MCF 10A (cell line): ENCODE measurements at regions of chr11 and their contacts with region 1.

Region 1: DNA sequence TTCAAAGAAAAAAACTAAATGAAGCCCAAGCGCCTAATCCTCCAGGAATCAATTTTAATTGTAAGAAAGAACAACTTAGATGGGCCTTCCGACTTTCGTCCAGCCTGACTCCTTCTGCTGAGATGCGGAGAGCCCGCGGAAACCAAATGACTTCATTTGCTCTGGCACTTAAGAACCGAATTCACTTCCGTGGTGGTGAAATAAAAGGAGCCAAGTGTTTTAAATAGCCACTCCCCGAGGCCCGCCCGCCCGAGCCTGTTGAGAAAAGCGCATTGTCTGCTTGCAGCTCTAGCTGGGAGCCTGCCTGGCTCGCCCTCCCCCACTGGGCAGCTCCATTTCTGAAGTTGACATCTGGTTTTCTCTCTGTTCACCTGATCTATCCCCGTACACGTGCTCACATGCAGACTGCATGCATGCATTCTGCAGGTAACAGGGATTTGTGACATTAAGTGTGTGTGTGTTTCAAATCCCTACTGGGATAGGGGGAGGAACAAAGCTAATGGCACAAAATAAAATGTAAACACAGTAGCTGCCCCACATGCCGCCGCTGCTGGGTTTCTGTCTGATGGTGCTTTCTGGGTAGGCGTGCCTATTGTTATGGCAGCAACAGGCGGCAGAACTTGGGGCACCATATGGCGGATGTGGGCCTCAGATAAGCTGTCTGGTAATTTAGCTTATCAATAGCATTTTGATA is 6.2 kb downstream of the TEAD1 start:
- DNase-seq: peak; percentile 93
- H3K4me3 Mint-ChIP-seq: peak overlapping the region; percentile 90
- H3K27ac Mint-ChIP-seq: peak overlapping the region; percentile 75
- H3K4me1 Mint-ChIP-seq: peaks cover 63% of the 10 kb centered on the region
- H3K27me3 Mint-ChIP-seq: no peaks in the 10 kb centered on the region
- CTCF ChIP-seq: no peak

Region 2: DNA sequence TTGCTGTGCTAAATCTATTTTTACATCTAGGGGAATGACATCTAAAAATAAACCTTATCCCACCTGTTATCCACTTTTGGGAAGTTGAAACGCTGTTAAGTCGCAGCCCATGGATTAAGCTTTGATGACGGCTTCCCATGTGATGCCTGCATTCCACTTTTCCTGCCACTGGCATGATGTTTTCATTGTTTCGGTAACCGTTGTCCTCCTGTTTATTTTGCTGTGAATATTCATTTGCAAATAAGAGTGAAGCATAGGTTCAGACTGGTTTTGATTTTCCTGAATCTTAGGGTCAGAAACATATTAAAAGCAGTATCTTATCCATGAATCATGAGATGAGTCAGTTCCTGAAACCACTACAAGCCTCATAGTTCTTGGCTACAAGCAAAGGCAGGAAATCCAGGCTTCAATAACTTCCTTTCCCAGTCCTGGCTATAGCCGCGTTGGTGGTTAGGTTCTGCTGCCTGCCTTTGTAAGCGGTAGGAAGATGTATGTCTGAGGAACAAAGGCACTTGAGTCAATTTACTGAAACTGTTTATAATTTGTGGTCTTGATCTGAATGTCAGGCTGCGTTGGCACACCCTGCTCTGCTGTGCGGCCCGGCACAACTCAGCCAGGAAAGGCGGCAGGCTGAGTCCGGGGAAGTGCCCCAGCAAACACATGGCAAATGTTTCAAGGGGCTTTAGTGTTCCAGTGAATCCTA is 13.2 kb after region 1 on chr11:
- CTCF ChIA-PET with region 1: interaction called, 8 read pairs
- POLR2A ChIA-PET with region 1: interaction called, 248 read pairs
- intact Hi-C with region 1: loop called (anchors 1 kb)
- DNase-seq: peak; percentile 97
- H3K4me3 Mint-ChIP-seq: peak overlapping the region; percentile 62
- H3K27ac Mint-ChIP-seq: peak overlapping the region; percentile 94
- H3K4me1 Mint-ChIP-seq: peaks cover 75% of the 10 kb centered on the region
- H3K27me3 Mint-ChIP-seq: no peaks in the 10 kb centered on the region
- CTCF ChIP-seq: no peak

Region 3: DNA sequence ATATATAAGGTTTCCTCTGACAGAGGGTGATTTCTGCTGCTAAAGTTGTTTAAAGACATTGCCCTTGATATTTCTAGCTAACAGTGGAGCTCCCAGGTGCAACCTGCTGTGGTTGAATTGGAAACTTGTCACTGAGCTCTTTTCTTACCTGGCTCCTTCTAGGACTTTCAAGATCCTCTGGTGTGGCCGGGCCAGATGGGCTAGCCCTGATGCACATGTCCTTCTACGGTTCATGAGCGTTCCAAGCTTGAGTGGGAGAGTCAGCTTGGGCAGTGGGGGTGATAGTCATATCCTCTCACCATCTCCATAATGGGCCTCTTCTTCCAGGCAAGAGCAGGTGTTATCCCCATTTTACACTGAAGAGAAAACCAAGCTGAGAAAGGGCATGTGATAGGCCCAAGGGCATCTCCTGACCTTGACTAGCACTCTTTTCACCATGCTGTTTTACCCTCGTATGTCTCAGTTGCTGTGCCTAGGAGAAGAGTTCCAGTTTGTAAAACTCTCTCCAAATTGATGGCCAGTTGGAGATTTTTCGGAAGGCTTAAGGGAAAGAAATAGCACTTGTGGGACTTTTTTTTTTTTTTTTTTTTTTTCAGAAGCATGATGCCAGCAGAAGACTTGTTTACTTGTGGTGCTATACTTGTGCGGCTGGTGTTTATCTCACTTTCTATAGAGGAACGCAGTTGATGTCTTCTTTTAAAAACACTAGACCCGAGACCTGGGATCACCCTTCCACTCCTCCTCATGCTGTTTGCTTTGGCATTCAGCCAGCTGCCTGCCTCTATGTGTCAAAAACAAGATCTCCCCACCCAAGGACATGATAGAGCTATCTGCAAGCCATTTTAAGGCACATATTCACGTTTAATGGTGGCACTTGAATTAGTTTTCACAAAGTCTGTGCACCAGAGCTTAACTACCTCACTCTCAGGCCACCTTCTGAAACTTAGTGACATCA is 26.4 kb after region 1 on chr11:
- CTCF ChIA-PET with region 1: interaction called, 3 read pairs
- POLR2A ChIA-PET with region 1: interaction called, 129 read pairs
- intact Hi-C with region 1: no loop called
- DNase-seq: peak; percentile 83
- H3K4me3 Mint-ChIP-seq: peak overlapping the region; percentile 24
- H3K27ac Mint-ChIP-seq: peak overlapping the region; percentile 82
- H3K4me1 Mint-ChIP-seq: peaks cover 70% of the 10 kb centered on the region
- H3K27me3 Mint-ChIP-seq: no peaks in the 10 kb centered on the region
- CTCF ChIP-seq: no peak

Region 4: DNA sequence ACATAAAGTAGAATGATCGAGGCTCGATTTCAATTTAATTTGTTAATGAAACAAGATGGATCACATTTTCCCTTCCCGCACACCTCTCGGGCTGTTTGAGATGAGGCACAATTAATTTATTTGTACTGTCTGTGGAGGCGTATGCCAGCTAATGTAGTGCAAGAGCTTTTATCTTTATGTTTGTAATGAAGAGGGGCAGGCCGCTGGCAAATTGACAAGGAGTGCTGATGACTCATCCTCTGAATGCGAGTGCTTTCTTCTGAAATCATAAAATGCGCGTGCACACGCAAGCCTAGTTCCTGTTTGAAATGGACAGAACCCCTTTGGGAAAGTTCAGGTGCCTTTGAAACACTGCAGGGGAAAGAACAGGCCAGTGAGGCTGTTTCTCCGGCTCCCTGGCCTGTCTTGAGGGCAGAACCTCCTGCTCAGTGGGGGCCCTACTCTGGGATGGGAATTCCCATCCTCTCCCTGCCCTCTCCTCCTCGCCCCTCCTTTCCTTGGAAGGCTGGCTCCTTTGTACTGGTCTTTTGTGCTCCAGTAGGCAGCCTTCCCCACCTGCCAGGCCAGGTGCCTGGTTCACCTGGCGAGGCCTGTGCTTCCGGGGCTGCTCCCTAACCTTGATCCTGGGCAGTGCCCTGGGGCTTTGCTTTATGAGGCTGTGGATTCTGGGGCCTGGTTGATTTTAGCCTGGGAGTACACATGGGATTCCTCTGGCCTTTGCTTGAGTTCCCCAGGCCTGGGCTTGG is 44.1 kb after region 1 on chr11:
- CTCF ChIA-PET with region 1: interaction called, 3 read pairs
- POLR2A ChIA-PET with region 1: interaction called, 46 read pairs
- intact Hi-C with region 1: loop called (anchors 5 kb)
- DNase-seq: peak; percentile 97
- H3K4me3 Mint-ChIP-seq: peak overlapping the region; percentile 63
- H3K27ac Mint-ChIP-seq: peak overlapping the region; percentile 96
- H3K4me1 Mint-ChIP-seq: peaks cover 58% of the 10 kb centered on the region
- H3K27me3 Mint-ChIP-seq: no peaks in the 10 kb centered on the region
- CTCF ChIP-seq: no peak

Region 5: GRCh38 chr11:12813371-12814225 is 133.2 kb after region 1 on chr11:
- CTCF ChIA-PET with region 1: interaction called, 11 read pairs
- POLR2A ChIA-PET with region 1: interaction called, 21 read pairs
- intact Hi-C with region 1: loop called (anchors 2 kb)
- DNase-seq: peak; percentile 75
- H3K4me3 Mint-ChIP-seq: no peak overlapping the region
- H3K27ac Mint-ChIP-seq: peak overlapping the region; percentile 26
- H3K4me1 Mint-ChIP-seq: peaks cover 57% of the 10 kb centered on the region
- H3K27me3 Mint-ChIP-seq: no peaks in the 10 kb centered on the region
- CTCF ChIP-seq: peak; percentile 23

Region 6: DNA sequence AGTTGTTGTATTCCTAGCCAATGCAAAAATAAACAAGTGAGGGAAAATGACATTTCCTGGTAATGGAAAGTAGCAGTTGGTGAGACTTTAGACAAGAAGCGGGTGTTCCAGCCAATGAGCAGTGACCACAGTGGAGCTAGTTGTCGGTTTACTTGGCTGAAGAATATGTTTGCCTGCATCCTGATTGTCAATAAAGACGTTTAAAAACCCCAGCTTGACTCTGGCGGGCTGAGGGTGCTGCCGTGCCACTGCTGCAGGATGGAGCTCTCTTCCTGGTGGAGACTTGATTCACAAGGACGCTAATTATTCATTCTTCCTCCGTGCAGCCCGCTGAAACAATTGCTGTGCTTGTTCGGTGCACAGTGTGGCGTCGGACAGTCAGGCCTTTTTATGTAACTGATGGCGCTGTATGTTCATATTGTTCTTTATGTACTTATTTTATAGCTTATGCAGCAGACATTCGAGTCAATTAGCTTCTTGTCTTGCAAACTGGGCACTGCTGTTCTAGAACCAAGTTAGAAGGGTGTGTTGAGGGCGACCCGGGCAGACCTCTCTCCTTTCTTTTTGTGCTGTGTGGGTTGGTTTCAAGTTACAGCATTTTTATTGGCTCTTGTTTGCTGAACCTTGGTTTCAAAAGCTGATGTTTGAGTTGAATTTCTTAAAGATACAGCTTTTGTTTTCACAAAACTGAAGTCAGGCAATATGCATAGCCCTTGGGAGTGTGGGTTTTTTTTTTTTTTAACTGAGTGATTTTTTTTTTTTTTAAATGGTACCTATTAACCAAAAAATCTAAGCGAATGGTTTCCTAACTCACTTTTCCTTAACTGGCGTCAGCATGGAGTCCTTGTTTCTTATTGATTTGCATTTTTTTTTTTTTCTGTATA is 147.8 kb after region 1 on chr11:
- CTCF ChIA-PET with region 1: interaction called, 4 read pairs
- POLR2A ChIA-PET with region 1: interaction called, 27 read pairs
- intact Hi-C with region 1: no loop called
- DNase-seq: peak; percentile 79
- H3K4me3 Mint-ChIP-seq: peak overlapping the region; percentile 80
- H3K27ac Mint-ChIP-seq: peak overlapping the region; percentile 85
- H3K4me1 Mint-ChIP-seq: peaks cover 29% of the 10 kb centered on the region
- H3K27me3 Mint-ChIP-seq: no peaks in the 10 kb centered on the region
- CTCF ChIP-seq: no peak

Region 7: GRCh38 chr11:12841946-12842630 is 161.7 kb after region 1 on chr11:
- CTCF ChIA-PET with region 1: interaction called, 4 read pairs
- POLR2A ChIA-PET with region 1: interaction called, 44 read pairs
- intact Hi-C with region 1: no loop called
- DNase-seq: peak; percentile 62
- H3K4me3 Mint-ChIP-seq: no peak overlapping the region
- H3K27ac Mint-ChIP-seq: peak overlapping the region; percentile 83
- H3K4me1 Mint-ChIP-seq: peaks cover 47% of the 10 kb centered on the region
- H3K27me3 Mint-ChIP-seq: no peaks in the 10 kb centered on the region
- CTCF ChIP-seq: no peak

Region 8: GRCh38 chr11:13143486-13144297 is 463.3 kb after region 1 on chr11:
- CTCF ChIA-PET with region 1: no interaction called
- POLR2A ChIA-PET with region 1: no interaction called
- intact Hi-C with region 1: no loop called
- DNase-seq: no peak
- H3K4me3 Mint-ChIP-seq: no peak overlapping the region
- H3K27ac Mint-ChIP-seq: no peak overlapping the region
- H3K4me1 Mint-ChIP-seq: peaks cover 8% of the 10 kb centered on the region
- H3K27me3 Mint-ChIP-seq: no peaks in the 10 kb centered on the region
- CTCF ChIP-seq: no peak